Caco-2 (cell line): ENCODE measurements at regions of chr1 and their contacts with region 1.

Region 1: GRCh38 chr1:176733661-176734060 is 270.7 kb downstream of the PAPPA2 start:
- DNase-seq: no peak
- H3K4me3 ChIP-seq: no peak overlapping the region
- H3K4me3 Mint-ChIP-seq: no peak overlapping the region
- H3K27ac Mint-ChIP-seq: no peak overlapping the region
- H3K4me1 ChIP-seq: no peaks in the 10 kb centered on the region
- H3K4me1 Mint-ChIP-seq: no peaks in the 10 kb centered on the region
- H3K27me3 ChIP-seq: no peaks in the 10 kb centered on the region
- H3K27me3 Mint-ChIP-seq: peaks cover 6% of the 10 kb centered on the region
- CTCF ChIP-seq: no peak

Region 2: GRCh38 chr1:176617881-176618280 is 115.8 kb before region 1 on chr1:
- CTCF ChIA-PET with region 1: no interaction called
- POLR2A ChIA-PET with region 1: no interaction called
- intact Hi-C with region 1: no loop called
- DNase-seq: no peak
- H3K4me3 ChIP-seq: no peak overlapping the region
- H3K4me3 Mint-ChIP-seq: no peak overlapping the region
- H3K27ac Mint-ChIP-seq: no peak overlapping the region
- H3K4me1 ChIP-seq: no peaks in the 10 kb centered on the region
- H3K4me1 Mint-ChIP-seq: no peaks in the 10 kb centered on the region
- H3K27me3 ChIP-seq: no peaks in the 10 kb centered on the region; the same call in 1 of the 2 replicates
- H3K27me3 Mint-ChIP-seq: peaks cover under 1% of the 10 kb centered on the region
- CTCF ChIP-seq: no peak

Region 3: DNA sequence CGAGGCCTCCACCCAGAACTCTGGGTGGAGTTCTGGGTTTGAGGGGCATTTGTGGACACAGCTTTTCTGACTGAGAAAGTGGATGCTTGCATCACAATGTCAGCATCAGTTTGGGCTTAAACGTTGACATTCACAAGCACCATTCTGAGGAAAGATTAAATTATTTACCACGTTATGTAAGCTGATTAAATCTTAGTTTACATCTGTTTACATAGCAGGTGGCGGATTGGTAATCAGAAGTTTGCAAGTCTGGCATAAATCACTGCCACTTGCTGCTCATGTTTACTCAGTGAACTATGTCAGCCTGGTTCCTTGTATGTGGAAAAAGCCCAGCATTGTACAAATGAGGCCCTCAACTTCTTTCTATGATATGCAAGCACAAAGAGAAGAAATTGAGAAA is 39.4 kb after region 1 on chr1:
- CTCF ChIA-PET with region 1: no interaction called
- POLR2A ChIA-PET with region 1: no interaction called
- intact Hi-C with region 1: loop called (anchors 1 kb)
- DNase-seq: no peak
- H3K4me3 ChIP-seq: no peak overlapping the region
- H3K4me3 Mint-ChIP-seq: no peak overlapping the region
- H3K27ac Mint-ChIP-seq: no peak overlapping the region
- H3K4me1 ChIP-seq: no peaks in the 10 kb centered on the region
- H3K4me1 Mint-ChIP-seq: no peaks in the 10 kb centered on the region
- H3K27me3 ChIP-seq: peaks cover 2% of the 10 kb centered on the region
- H3K27me3 Mint-ChIP-seq: peaks cover 23% of the 10 kb centered on the region
- CTCF ChIP-seq: no peak

Region 4: GRCh38 chr1:176837708-176838107 is 104.0 kb after region 1 on chr1:
- CTCF ChIA-PET with region 1: no interaction called
- POLR2A ChIA-PET with region 1: no interaction called
- intact Hi-C with region 1: no loop called
- DNase-seq: no peak
- H3K4me3 ChIP-seq: no peak overlapping the region
- H3K4me3 Mint-ChIP-seq: no peak overlapping the region
- H3K27ac Mint-ChIP-seq: no peak overlapping the region
- H3K4me1 ChIP-seq: no peaks in the 10 kb centered on the region
- H3K4me1 Mint-ChIP-seq: no peaks in the 10 kb centered on the region
- H3K27me3 ChIP-seq: no peaks in the 10 kb centered on the region
- H3K27me3 Mint-ChIP-seq: peaks cover 13% of the 10 kb centered on the region
- CTCF ChIP-seq: no peak

Region 5: DNA sequence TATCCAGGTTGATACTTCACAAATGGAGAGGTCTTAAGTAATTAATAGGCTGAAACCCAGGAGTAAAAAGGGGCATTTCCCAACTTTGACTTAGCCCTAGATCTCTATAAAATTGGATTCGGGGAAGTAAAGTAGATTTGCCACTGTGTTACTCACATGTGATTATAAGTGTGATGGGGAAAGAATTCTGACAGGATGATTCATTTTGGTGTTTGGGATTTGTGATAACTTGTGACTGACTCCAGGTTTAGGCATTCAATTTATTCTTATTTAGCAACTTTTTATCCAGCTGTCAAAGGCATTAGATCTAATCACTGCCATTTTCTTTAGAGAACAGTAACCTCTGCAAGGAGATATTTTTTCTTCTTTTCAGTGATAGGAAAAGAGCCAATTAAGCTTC is 255.4 kb after region 1 on chr1:
- CTCF ChIA-PET with region 1: no interaction called
- POLR2A ChIA-PET with region 1: no interaction called
- intact Hi-C with region 1: no loop called
- DNase-seq: no peak
- H3K4me3 ChIP-seq: no peak overlapping the region
- H3K4me3 Mint-ChIP-seq: no peak overlapping the region
- H3K27ac Mint-ChIP-seq: no peak overlapping the region
- H3K4me1 ChIP-seq: no peaks in the 10 kb centered on the region
- H3K4me1 Mint-ChIP-seq: no peaks in the 10 kb centered on the region
- H3K27me3 ChIP-seq: no peaks in the 10 kb centered on the region; the same call in none of the 2 replicates
- H3K27me3 Mint-ChIP-seq: peaks cover 20% of the 10 kb centered on the region
- CTCF ChIP-seq: no peak